Activated naive CD4-positive, alpha-beta T cell treated with anti-CD3 and anti-CD28 coated beads for 36 hours (primary cell): ENCODE measurements at regions of chr6 and their contacts with region 1.

Region 1: DNA sequence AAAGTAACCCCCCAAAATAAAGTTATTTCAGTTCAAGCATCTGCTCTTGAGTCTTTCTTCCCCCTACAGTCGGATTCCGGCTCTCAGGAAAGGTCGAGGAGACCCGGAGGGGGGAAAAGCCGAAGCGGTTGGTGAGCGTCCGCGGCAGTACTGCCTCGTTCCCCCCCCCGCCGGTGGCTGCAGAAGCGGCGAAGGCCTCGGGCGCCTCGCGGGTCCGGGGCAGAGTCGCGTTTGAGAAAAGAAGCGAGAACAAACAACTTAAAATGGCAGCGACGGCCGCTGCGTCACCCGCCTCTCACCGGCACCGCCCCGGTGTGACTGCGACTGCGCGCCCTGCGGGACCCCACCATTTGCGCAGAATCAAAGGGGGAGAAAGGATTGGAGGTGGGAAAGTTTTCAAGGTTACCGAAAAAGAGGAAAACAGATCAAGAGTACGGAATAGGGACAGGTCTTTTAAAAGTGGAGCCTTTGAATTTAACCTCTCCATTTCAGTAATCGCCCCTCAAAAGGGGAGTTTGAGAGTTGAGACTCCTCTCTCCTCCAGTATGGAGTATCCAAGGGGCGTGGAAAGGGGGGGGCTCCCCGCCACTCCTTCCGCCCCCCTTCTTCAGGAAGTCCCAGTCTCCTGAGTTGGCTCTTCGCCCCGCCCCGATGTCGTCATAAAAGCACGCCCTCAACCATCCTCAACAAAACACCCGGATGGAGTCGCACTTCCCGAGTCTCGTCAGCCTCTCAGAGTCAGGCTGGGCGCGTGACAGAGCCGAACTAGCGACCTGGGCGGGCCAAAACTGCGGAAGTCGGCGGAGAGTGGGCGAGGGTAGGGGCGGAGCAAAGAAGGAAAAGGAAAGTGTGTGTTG is 1.9 kb upstream of the C6orf62 start:
- DNase-seq: peak; percentile 100
- H3K4me3 Mint-ChIP-seq: peak overlapping the region; percentile 99
- H3K27ac Mint-ChIP-seq: peak overlapping the region; percentile 95
- H3K4me1 Mint-ChIP-seq: peaks cover 29% of the 10 kb centered on the region
- H3K27me3 Mint-ChIP-seq: no peaks in the 10 kb centered on the region

Region 2: GRCh38 chr6:24666641-24667377 is 54.0 kb before region 1 on chr6 and contains the starts of genes ACOT13 and TDP2:
- CTCF ChIA-PET with region 1: no interaction called
- intact Hi-C with region 1: loop called (anchors 1 kb)
- DNase-seq: peak; percentile 97
- H3K4me3 Mint-ChIP-seq: peak within 1 kb of the TSS; percentile 90
- H3K27ac Mint-ChIP-seq: peak within 1 kb of the TSS; percentile 95
- H3K4me1 Mint-ChIP-seq: peaks cover 35% of the 10 kb centered on the region
- H3K27me3 Mint-ChIP-seq: no peaks in the 10 kb centered on the region
- total RNA-seq, gene ACOT13: 34.0 to 36.1 TPM
- total RNA-seq, gene TDP2: 41.5 to 44.2 TPM

Region 3: DNA sequence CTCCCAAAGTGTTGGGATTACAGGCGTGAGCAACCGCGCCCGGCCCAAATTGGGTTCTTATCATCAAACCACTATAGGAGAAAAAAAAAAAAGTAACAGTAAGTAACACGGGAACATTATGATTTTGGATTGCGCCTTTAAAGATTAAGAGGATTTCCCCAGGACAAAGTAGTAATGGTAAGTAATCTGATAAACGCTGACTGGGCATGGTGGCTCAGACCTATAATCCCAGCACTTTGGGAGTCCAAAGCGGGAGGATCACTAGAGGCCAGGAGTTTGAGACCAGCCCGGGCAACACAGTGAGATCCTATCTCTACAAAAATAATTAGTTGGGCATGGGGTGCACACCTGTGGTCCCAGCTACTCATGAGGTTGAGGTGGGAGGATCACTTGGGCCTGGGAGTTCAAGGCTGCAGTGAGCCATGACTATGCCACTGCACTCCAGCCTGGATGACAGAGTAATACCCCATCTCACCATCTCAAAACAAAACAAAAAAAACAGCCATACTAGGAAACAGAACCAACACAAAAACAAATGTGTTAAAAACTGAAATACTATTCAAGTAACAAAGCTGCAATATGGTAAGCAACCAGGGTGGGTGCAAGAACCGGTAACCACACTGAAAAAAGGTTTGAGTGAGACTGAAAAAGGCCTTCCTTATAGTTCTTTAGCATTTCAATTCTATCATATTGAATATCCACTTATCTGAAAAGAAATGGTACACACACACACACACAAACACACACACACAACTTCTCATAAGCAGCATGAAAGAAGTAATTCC is 10.1 kb before region 1 on chr6:
- CTCF ChIA-PET with region 1: interaction called, 10 read pairs
- intact Hi-C with region 1: loop called (anchors 1 kb)
- DNase-seq: no peak
- H3K4me3 Mint-ChIP-seq: no peak overlapping the region
- H3K27ac Mint-ChIP-seq: peak overlapping the region; percentile 72
- H3K4me1 Mint-ChIP-seq: peaks cover 57% of the 10 kb centered on the region
- H3K27me3 Mint-ChIP-seq: no peaks in the 10 kb centered on the region

Region 4: DNA sequence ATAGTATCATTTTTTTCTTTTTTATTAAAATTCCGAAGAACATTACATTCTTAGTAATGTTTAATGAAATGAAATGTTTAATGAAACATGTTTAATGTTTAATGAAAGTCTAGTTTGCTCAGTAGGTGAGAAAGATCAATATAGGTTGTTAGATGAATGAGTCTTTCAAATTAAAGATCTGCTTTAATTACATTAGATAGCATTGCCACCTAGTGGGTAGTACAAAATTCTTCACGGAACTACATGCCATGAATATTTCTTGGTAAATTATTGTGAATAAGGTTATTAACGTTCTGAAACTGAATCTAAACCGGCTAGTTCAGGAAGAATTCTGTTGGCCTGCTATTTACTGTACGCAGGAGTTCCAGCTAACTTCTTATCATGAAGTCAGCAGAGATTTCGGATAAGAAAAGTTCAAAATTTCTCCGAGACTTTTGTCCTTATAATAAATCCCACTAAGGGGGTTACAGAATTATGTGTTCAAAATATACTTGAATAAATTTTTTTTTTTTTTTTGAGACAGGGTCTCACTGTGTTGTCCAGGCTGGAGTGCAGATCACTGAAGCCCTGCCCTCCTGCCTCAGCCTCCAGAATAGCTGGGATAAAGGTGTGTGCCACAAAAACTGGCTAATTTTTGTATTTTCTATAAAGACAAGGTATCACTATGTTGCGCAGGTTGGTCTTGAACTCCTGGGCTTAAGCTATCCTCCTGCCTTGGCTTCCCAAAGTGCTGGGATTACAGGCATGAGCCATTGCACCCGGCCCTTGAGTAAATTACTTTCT is 46.0 kb after region 1 on chr6:
- CTCF ChIA-PET with region 1: interaction called, 7 read pairs
- intact Hi-C with region 1: loop called (anchors 2 kb)
- DNase-seq: no peak
- H3K4me3 Mint-ChIP-seq: no peak overlapping the region
- H3K27ac Mint-ChIP-seq: no peak overlapping the region
- H3K4me1 Mint-ChIP-seq: peaks cover 3% of the 10 kb centered on the region
- H3K27me3 Mint-ChIP-seq: no peaks in the 10 kb centered on the region

Region 5: GRCh38 chr6:25042036-25042521 is 321.2 kb after region 1 on chr6:
- CTCF ChIA-PET with region 1: no interaction called
- intact Hi-C with region 1: loop called (anchors 1 kb)
- DNase-seq: peak; percentile 73
- H3K4me3 Mint-ChIP-seq: peak overlapping the region; percentile 92
- H3K27ac Mint-ChIP-seq: peak overlapping the region; percentile 97
- H3K4me1 Mint-ChIP-seq: peaks cover 66% of the 10 kb centered on the region
- H3K27me3 Mint-ChIP-seq: no peaks in the 10 kb centered on the region